ENCODE measurements at regions of chr13 and their contacts with region 1.

Region 1: GRCh38 chr13:96817336-96817941 is 176.8 kb downstream of the OXGR1 start:
- DNase-seq: peak; percentile 22
- H3K4me3 ChIP-seq: no peak overlapping the region
- H3K27ac ChIP-seq: no peak overlapping the region
- H3K4me1 ChIP-seq: no peaks in the 10 kb centered on the region
- H3K27me3 ChIP-seq: no peaks in the 10 kb centered on the region
- CTCF ChIP-seq: peak; percentile 66

Region 2: DNA sequence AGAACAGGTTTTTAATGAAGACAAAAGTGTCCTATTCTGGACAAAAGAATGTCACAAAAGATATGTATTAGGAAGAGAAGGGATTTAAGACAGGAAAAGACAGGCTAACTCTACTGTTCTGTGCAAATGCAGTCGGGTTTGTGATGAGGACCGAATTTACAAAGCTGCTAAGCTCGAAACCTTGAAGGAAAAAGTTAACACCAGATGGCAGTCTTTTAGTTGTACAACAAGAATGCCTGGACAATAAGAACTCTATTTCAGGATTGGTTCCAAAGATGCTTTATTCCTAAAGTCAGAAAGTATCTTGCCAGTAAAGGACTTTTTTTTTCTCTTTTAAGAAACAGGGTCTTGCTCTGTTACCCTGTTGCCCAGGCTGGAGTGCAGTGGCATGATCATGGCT is 676.4 kb before region 1 on chr13:
- CTCF ChIA-PET with region 1: interaction called, 3 read pairs
- POLR2A ChIA-PET with region 1: no interaction called
- intact Hi-C with region 1: loop called (anchors 5 kb)
- DNase-seq: peak; percentile 15
- H3K4me3 ChIP-seq: no peak overlapping the region
- H3K27ac ChIP-seq: no peak overlapping the region
- H3K4me1 ChIP-seq: no peaks in the 10 kb centered on the region
- H3K27me3 ChIP-seq: no peaks in the 10 kb centered on the region
- CTCF ChIP-seq: peak; percentile 43; the same call in 1 of the 2 replicates

Measured in A673 (cell line).